Endothelial cell of umbilical vein (primary cell): ENCODE measurements at regions of chr2 and their contacts with region 1.

Region 1: DNA sequence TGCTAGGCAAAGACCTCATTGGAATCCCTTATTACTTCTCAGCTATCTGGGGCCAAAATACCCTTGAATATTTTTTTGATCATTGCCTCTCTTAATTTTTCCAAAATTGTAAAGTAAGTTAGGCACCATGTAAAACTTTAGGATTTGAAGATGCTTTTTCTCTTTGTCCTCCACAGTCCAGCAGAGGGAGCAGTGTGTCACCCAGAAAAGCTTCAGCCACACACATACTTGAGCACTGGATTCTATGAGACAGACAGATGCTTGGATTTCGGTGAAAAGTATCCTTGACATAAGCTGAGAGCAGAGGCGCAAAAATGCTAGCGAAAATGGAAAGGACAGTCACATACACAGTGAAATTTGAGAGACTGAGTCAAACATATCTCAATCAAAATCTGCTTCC is 74.7 kb upstream of the KCNJ3 start:
- DNase-seq: peak; percentile 45
- H3K4me3 ChIP-seq: no peak overlapping the region
- H3K27ac ChIP-seq: no peak overlapping the region
- H3K4me1 ChIP-seq: no peaks in the 10 kb centered on the region
- H3K27me3 ChIP-seq: no peaks in the 10 kb centered on the region
- CTCF ChIP-seq: peak; percentile 37 to 53
- POLR2A ChIP-seq: no peak

Region 2: DNA sequence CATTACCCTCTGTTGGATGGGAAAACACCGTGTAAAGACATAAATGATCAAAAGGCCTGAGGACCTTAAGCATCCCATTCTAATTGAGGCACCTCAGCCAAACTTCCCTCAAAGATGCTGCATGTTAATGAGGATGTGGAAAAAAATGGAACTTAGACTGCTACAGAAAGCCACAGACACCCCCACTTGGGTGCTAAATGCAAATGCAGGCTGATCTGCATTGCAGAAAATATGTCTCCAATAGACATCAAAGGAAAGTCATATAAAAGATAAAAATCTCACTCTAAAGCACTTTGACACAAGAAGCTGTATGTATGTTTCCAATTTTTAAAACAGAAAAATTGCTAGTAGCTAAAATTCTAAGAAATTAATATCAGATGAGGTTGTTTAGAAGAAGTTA is 579.4 kb after region 1 on chr2:
- CTCF ChIA-PET with region 1: interaction called, 4 read pairs
- POLR2A ChIA-PET with region 1: no interaction called
- dilution Hi-C with region 1: no loop called
- intact Hi-C with region 1: loop called (anchors 5 kb)
- DNase-seq: no peak
- H3K4me3 ChIP-seq: no peak overlapping the region
- H3K27ac ChIP-seq: no peak overlapping the region
- H3K4me1 ChIP-seq: no peaks in the 10 kb centered on the region
- H3K27me3 ChIP-seq: no peaks in the 10 kb centered on the region
- CTCF ChIP-seq: no peak
- POLR2A ChIP-seq: no peak

Region 3: DNA sequence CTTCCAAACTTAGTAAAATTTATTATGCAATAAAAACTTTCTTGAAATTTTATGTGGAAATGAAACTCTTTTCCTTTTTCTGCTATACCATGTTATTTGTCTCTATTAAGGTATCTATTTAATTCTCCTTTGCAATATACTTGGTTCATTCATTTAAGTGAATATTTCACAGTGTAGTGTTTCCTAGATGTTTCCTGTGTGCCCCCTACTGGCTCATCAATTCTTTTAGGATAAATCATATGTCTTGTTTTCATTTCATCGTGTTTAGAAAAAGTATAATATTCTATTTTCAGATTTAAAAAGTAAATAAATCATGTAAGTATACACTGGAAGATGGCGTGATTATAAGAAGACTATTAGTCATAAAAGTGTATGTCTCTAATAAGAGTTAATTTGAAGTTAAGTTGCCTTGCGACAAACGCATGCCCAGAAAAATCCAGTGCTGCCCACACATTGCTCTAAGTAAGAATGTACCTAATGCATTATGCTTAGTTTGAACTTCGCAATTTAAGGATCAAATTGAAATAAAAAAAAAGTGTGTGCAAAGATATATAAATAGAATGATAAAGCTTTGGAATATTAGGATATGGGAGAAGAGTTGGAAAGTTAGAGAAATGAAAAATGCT is 600.1 kb after region 1 on chr2:
- CTCF ChIA-PET with region 1: interaction called, 8 read pairs
- POLR2A ChIA-PET with region 1: no interaction called
- dilution Hi-C with region 1: no loop called
- intact Hi-C with region 1: loop called (anchors 1 kb)
- DNase-seq: peak; percentile 37
- H3K4me3 ChIP-seq: no peak overlapping the region
- H3K27ac ChIP-seq: no peak overlapping the region
- H3K4me1 ChIP-seq: no peaks in the 10 kb centered on the region
- H3K27me3 ChIP-seq: no peaks in the 10 kb centered on the region
- CTCF ChIP-seq: peak; percentile 6 to 10
- POLR2A ChIP-seq: no peak

Region 4: GRCh38 chr2:155250800-155251199 is 627.0 kb after region 1 on chr2:
- CTCF ChIA-PET with region 1: interaction called, 5 read pairs
- POLR2A ChIA-PET with region 1: no interaction called
- dilution Hi-C with region 1: no loop called
- intact Hi-C with region 1: loop called (anchors 1 kb)
- DNase-seq: peak; percentile 17
- H3K4me3 ChIP-seq: no peak overlapping the region
- H3K27ac ChIP-seq: no peak overlapping the region
- H3K4me1 ChIP-seq: no peaks in the 10 kb centered on the region
- H3K27me3 ChIP-seq: no peaks in the 10 kb centered on the region
- CTCF ChIP-seq: peak; percentile 25 to 30
- POLR2A ChIP-seq: no peak

Region 5: GRCh38 chr2:155310589-155310988 is 686.8 kb after region 1 on chr2:
- CTCF ChIA-PET with region 1: interaction called, 17 read pairs
- POLR2A ChIA-PET with region 1: no interaction called
- dilution Hi-C with region 1: no loop called
- intact Hi-C with region 1: loop called (anchors 1 kb)
- DNase-seq: peak; percentile 33
- H3K4me3 ChIP-seq: no peak overlapping the region
- H3K27ac ChIP-seq: no peak overlapping the region
- H3K4me1 ChIP-seq: no peaks in the 10 kb centered on the region
- H3K27me3 ChIP-seq: no peaks in the 10 kb centered on the region
- CTCF ChIP-seq: peak in 1 of 2 donors; percentile 8
- POLR2A ChIP-seq: no peak